Psoas muscle (tissue), 8 donors: ENCODE measurements at regions of chr1 and their contacts with region 1.

Region 1: GRCh38 chr1:3126756-3127597 is 58.0 kb downstream of the PRDM16 start:
- DNase-seq: no peak
- ATAC-seq: peak in 1 of 4 donors; percentile 8
- H3K4me3 ChIP-seq: no peak overlapping the region
- H3K27ac ChIP-seq: no peak overlapping the region
- H3K4me1 ChIP-seq: peaks cover 17% of the 10 kb centered on the region
- H3K27me3 ChIP-seq: peaks cover 0 to 4% (median 0%) of the 10 kb centered on the region in 3 donors
- CTCF ChIP-seq: no peak

Region 2: GRCh38 chr1:3265835-3266805 is 139.1 kb after region 1 on chr1:
- intact Hi-C with region 1: loop called in 1 of 2 experiments (anchors 5 kb)
- DNase-seq: no peak
- ATAC-seq: no peak
- H3K4me3 ChIP-seq: no peak overlapping the region
- H3K27ac ChIP-seq: no peak overlapping the region
- H3K4me1 ChIP-seq: no peaks in the 10 kb centered on the region
- H3K27me3 ChIP-seq: peaks cover 0 to 20% (median 14%) of the 10 kb centered on the region in 3 donors
- CTCF ChIP-seq: no peak